ENCODE measurements at regions of chr6 and their contacts with region 1.

Region 1: DNA sequence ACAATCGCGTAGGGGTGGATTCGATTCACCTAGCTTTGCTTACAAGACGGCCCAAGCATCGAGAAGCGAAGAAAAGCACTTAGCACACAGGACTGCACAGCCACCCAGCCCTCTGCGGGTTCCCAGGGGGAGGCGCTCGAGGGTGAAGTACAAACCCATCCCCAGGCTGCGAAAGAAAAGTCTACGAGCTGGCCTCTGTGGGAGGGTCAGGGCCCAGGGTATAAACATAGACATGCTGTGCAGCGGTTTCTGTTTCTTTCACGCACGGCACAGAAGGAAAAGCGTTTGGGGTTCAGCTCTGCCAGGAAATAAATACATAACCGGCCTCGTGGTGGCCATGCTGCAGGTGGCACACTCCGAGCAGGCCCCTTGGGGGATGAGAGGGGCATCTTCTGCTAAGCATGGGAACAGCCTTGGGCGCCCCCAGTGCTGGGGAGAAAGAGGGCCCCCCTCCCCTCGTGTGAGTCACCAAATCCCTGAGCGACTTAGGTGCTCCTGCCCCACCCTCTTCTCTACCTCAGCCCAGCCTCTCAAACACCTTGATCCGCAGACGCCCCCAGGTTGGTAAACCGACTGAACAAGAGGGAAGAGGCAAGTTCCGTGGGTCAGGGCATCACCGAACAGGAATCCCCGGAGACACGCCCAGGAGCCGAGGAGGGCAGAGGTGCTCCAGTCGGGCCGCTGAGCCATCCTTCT is 91.6 kb upstream of the RIPOR2 start:
- DNase-seq: peak; percentile 64 to 93 (median 76)
- ATAC-seq: peak; percentile 93
- H3K4me3 ChIP-seq: peak overlapping the region; percentile 47
- H3K4me3 Mint-ChIP-seq: peak overlapping the region; percentile 70
- H3K27ac ChIP-seq: peak overlapping the region; percentile 60 to 62
- H3K27ac Mint-ChIP-seq: peak overlapping the region; percentile 91
- H3K4me1 ChIP-seq: peaks cover 37% of the 10 kb centered on the region
- H3K4me1 Mint-ChIP-seq: peaks cover 59% of the 10 kb centered on the region
- H3K27me3 ChIP-seq: no peaks in the 10 kb centered on the region
- H3K27me3 Mint-ChIP-seq: no peaks in the 10 kb centered on the region
- CTCF ChIP-seq: peak; percentile 41

Region 2: GRCh38 chr6:24774696-24775519 is 252.5 kb before region 1 on chr6 and contains the start of gene GMNN:
- CTCF ChIA-PET with region 1: no interaction called
- POLR2A ChIA-PET with region 1: interaction called, 7 read pairs
- intact Hi-C with region 1: loop called in 1 of 2 experiments (anchors 5 kb)
- DNase-seq: peak; percentile 95 to 99 (median 97)
- ATAC-seq: peak; percentile 83
- H3K4me3 ChIP-seq: peak within 1 kb of the TSS; percentile 99
- H3K4me3 Mint-ChIP-seq: peak within 1 kb of the TSS; percentile 99
- H3K27ac ChIP-seq: peak within 1 kb of the TSS; percentile 87 to 94
- H3K27ac Mint-ChIP-seq: peak within 1 kb of the TSS; percentile 99
- H3K4me1 ChIP-seq: peaks cover 15% of the 10 kb centered on the region
- H3K4me1 Mint-ChIP-seq: peaks cover 32% of the 10 kb centered on the region
- H3K27me3 ChIP-seq: no peaks in the 10 kb centered on the region
- H3K27me3 Mint-ChIP-seq: no peaks in the 10 kb centered on the region
- CTCF ChIP-seq: no peak
- total RNA-seq, gene GMNN: 10.1 to 10.5 TPM

Region 3: GRCh38 chr6:24855395-24856245 is 171.7 kb before region 1 on chr6:
- CTCF ChIA-PET with region 1: interaction called, 35 read pairs
- POLR2A ChIA-PET with region 1: interaction called, 13 read pairs
- intact Hi-C with region 1: no loop called
- DNase-seq: peak; percentile 49 to 90 (median 61)
- ATAC-seq: peak; percentile 66
- H3K4me3 ChIP-seq: no peak overlapping the region
- H3K4me3 Mint-ChIP-seq: peak overlapping the region; percentile 17
- H3K27ac ChIP-seq: peak overlapping the region; percentile 35 to 61
- H3K27ac Mint-ChIP-seq: peak overlapping the region; percentile 93
- H3K4me1 ChIP-seq: peaks cover 51% of the 10 kb centered on the region
- H3K4me1 Mint-ChIP-seq: peaks cover 67% of the 10 kb centered on the region
- H3K27me3 ChIP-seq: no peaks in the 10 kb centered on the region
- H3K27me3 Mint-ChIP-seq: no peaks in the 10 kb centered on the region
- CTCF ChIP-seq: peak; percentile 79

Region 4: GRCh38 chr6:24888715-24889370 is 138.5 kb before region 1 on chr6:
- CTCF ChIA-PET with region 1: interaction called, 12 read pairs
- POLR2A ChIA-PET with region 1: interaction called, 3 read pairs
- intact Hi-C with region 1: no loop called
- DNase-seq: no peak
- ATAC-seq: peak; percentile 62
- H3K4me3 ChIP-seq: no peak overlapping the region
- H3K4me3 Mint-ChIP-seq: peak overlapping the region; percentile 8
- H3K27ac ChIP-seq: peak overlapping the region in 1 of 2 donors; percentile 30
- H3K27ac Mint-ChIP-seq: peak overlapping the region; percentile 97
- H3K4me1 ChIP-seq: peaks cover 53% of the 10 kb centered on the region
- H3K4me1 Mint-ChIP-seq: peaks cover 93% of the 10 kb centered on the region
- H3K27me3 ChIP-seq: no peaks in the 10 kb centered on the region
- H3K27me3 Mint-ChIP-seq: no peaks in the 10 kb centered on the region
- CTCF ChIP-seq: no peak

Region 5: GRCh38 chr6:25042036-25042521 is 14.7 kb after region 1 on chr6:
- CTCF ChIA-PET with region 1: interaction called, 44 read pairs
- POLR2A ChIA-PET with region 1: interaction called, 105 read pairs
- intact Hi-C with region 1: loop called in 1 of 2 experiments (anchors 1 kb)
- DNase-seq: peak in 13 of 14 experiments; percentile 27 to 85 (median 55)
- ATAC-seq: peak; percentile 73
- H3K4me3 ChIP-seq: peak overlapping the region; percentile 71
- H3K4me3 Mint-ChIP-seq: peak overlapping the region; percentile 92
- H3K27ac ChIP-seq: peak overlapping the region; percentile 76 to 83
- H3K27ac Mint-ChIP-seq: peak overlapping the region; percentile 96
- H3K4me1 ChIP-seq: peaks cover 50% of the 10 kb centered on the region
- H3K4me1 Mint-ChIP-seq: peaks cover 56% of the 10 kb centered on the region
- H3K27me3 ChIP-seq: no peaks in the 10 kb centered on the region
- H3K27me3 Mint-ChIP-seq: no peaks in the 10 kb centered on the region
- CTCF ChIP-seq: no peak

Region 6: DNA sequence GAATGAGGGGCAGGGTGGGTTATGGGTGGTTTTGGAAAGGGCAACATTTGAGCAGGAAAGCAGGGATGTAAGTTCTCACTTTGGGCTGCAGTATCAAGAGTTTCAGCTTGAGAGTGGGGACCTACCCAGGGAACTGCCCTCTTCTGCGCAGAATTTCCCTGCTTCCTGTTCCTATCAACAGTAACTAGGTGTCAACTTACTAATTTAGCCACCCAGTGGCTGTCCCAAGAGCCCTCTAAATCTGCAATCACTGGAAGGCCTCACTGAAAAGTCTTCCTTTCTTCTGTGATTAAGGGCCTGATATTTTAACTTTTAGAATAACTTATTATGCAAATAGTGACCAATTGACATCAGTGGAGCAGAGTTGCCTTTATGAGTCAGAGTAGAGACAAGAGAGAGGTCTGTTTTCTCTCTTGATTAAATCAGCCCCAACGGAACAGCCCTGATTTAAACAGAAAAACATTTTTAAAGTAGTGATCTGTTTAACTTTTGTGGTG is 26.6 kb after region 1 on chr6:
- CTCF ChIA-PET with region 1: interaction called, 27 read pairs
- POLR2A ChIA-PET with region 1: interaction called, 24 read pairs
- intact Hi-C with region 1: no loop called
- DNase-seq: peak in 4 of 14 experiments; percentile 14 to 75 (median 66)
- ATAC-seq: no peak
- H3K4me3 ChIP-seq: no peak overlapping the region
- H3K4me3 Mint-ChIP-seq: no peak overlapping the region
- H3K27ac ChIP-seq: peak overlapping the region in 1 of 2 donors; percentile 19
- H3K27ac Mint-ChIP-seq: peak overlapping the region; percentile 40
- H3K4me1 ChIP-seq: peaks cover 76% of the 10 kb centered on the region
- H3K4me1 Mint-ChIP-seq: peaks cover 72% of the 10 kb centered on the region
- H3K27me3 ChIP-seq: no peaks in the 10 kb centered on the region
- H3K27me3 Mint-ChIP-seq: no peaks in the 10 kb centered on the region
- CTCF ChIP-seq: no peak

Region 7: GRCh38 chr6:25061289-25061936 is 34.0 kb after region 1 on chr6:
- CTCF ChIA-PET with region 1: interaction called, 19 read pairs
- POLR2A ChIA-PET with region 1: interaction called, 24 read pairs
- intact Hi-C with region 1: no loop called
- DNase-seq: no peak
- ATAC-seq: no peak
- H3K4me3 ChIP-seq: no peak overlapping the region
- H3K4me3 Mint-ChIP-seq: no peak overlapping the region
- H3K27ac ChIP-seq: no peak overlapping the region
- H3K27ac Mint-ChIP-seq: no peak overlapping the region
- H3K4me1 ChIP-seq: peaks cover 16% of the 10 kb centered on the region
- H3K4me1 Mint-ChIP-seq: peaks cover 17% of the 10 kb centered on the region
- H3K27me3 ChIP-seq: no peaks in the 10 kb centered on the region
- H3K27me3 Mint-ChIP-seq: no peaks in the 10 kb centered on the region
- CTCF ChIP-seq: no peak

Measured in CD4-positive, alpha-beta T cell (primary cell).